A549 (cell line): ENCODE measurements at regions of chr20 and their contacts with region 1.

Region 1: DNA sequence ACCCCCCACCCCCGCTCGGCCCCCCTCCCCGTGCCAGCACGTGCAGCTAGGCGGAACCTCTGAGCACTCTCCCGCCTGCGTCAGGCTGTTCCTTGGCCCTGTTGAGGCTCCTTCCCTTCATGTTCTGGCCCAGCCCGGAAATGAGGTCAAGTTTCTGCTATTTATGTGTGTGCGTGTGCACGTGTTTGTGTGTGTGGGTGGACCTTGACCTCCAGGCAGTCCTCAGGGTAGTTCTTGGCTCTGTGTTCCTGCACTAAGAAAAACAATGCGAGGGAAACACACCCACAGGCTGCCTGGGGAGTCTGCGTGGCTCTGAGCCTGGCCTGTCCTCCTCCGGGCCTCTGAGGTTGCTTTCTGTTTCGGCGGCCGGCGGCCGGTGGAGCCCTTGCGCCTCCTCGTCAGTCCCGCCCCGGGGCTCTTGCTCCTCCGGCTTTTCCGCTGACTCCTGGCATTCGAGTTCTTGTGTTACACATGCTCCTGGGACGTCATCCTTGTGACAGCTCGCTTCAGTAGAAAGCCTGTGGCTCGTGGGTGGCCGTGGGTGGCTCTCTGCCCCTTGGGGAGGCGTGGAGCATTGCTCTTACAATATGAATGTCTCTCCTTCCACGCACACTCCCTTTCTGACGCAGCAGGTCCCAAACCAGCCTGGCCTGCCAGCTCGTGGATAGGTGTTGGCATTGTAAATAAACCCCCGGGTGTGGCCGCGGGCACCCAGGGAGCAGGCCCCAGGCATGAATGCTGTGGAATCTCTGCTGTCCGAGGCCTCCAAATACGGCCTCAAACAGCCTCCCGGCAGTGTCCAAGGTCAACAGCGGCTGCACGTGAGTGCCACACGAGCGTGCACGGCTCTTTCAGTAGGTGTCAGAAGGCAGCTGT is 10.0 kb downstream of the SLCO4A1 start:
- DNase-seq: peak; percentile 79 to 88
- ATAC-seq: peak; percentile 70 to 88
- H3K4me3 ChIP-seq: peak overlapping the region; percentile 25; the same call in 2 of the 3 replicates
- H3K27ac ChIP-seq: peak overlapping the region; percentile 74 to 85
- H3K4me1 ChIP-seq: peaks cover 19% of the 10 kb centered on the region
- CTCF ChIP-seq: no peak
- EP300 ChIP-seq: no peak
- POLR2A ChIP-seq: no peak
- RAD21 ChIP-seq: no peak

Region 2: GRCh38 chr20:62668441-62669027 is 16.2 kb after region 1 on chr20:
- CTCF ChIA-PET with region 1: interaction called, 26 read pairs
- POLR2A ChIA-PET with region 1: no interaction called
- DNase-seq: peak; percentile 72 to 91
- ATAC-seq: peak; percentile 79 to 91
- H3K4me3 ChIP-seq: no peak overlapping the region
- H3K27ac ChIP-seq: no peak overlapping the region
- H3K4me1 ChIP-seq: no peaks in the 10 kb centered on the region
- CTCF ChIP-seq: peak; percentile 88
- EP300 ChIP-seq: no peak
- POLR2A ChIP-seq: no peak
- RAD21 ChIP-seq: peak; percentile 93 to 97

Region 3: GRCh38 chr20:62682912-62683517 is 30.7 kb after region 1 on chr20:
- CTCF ChIA-PET with region 1: no interaction called
- POLR2A ChIA-PET with region 1: no interaction called
- DNase-seq: no peak
- ATAC-seq: no peak
- H3K4me3 ChIP-seq: no peak overlapping the region
- H3K27ac ChIP-seq: no peak overlapping the region
- H3K4me1 ChIP-seq: no peaks in the 10 kb centered on the region
- CTCF ChIP-seq: no peak
- EP300 ChIP-seq: no peak
- POLR2A ChIP-seq: no peak
- RAD21 ChIP-seq: no peak